Sciatic nerve (tissue), 2 donors: ENCODE measurements at regions of chr12 and their contacts with region 1.

Region 1: DNA sequence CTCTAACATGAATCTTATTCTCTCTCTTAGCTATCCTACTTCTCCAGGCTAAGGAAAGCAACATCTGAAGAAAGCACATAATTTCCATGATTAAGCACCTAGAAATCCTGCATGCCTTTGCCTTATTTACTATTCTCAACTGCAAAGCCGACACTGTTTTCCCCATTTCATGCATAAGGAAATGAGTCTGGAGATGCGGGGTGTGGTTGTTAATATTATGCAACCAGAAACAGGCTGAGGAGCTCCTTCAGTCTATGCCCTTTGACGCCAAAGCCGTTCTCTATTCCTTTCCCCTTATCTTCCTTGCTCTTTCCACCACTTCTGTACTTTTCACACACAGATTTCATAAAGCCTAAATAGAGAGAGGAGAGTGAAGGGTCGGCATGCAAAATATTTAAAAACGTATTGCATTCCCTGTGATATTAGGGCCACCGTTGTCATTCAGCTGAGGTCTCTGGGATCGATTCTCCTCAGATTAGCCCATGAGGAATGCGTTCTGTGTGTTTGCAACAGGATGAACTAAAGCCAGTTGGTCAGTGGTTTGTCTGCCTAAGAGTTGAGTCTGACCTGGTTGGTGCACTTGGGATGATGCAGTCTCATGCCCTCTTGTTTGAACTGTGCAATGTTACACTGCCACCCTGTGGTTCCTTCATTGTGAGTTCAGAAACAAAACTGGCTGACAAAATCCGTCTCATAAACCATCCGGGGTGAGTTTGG is 53.1 kb upstream of the PLEKHG7 start:
- DNase-seq: no peak
- ATAC-seq: peak; percentile 92

Region 2: GRCh38 chr12:91370086-91370868 is 1279.4 kb before region 1 on chr12:
- intact Hi-C with region 1: loop called (anchors 10 kb)
- DNase-seq: no peak
- ATAC-seq: no peak